ENCODE measurements at regions of chr12 and their contacts with region 1.

Region 1: DNA sequence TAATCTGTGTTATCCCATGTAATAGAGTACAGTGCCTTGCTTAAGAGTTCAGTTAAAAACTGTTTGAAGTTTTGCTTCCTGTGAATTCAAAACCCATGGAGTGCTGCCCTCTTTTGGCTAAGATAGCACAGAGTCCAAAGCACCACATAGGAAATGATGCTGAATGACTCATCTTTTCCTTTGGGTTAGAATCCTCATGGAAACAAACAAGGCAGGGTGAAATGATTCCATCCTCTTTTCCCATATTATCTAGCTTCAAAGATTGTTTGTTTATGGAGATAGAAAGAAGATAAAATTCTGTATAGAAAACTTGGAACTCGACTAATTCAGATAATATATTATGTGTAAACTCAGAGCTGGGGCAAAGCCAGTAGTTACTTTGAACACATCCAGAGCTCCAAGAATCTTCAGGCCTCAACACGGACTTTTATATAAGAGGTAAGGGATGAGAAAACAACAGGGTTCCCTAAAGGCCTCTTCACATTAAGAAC is 87.4 kb downstream of the OTOGL start:
- DNase-seq: peak; percentile 82
- H3K4me3 ChIP-seq: no peak overlapping the region
- H3K27ac ChIP-seq: peak overlapping the region; percentile 70
- H3K4me1 ChIP-seq: peaks cover 10% of the 10 kb centered on the region
- H3K27me3 ChIP-seq: no peaks in the 10 kb centered on the region
- CTCF ChIP-seq: peak; percentile 85 to 87

Region 2: GRCh38 chr12:79420146-79420618 is 766.6 kb before region 1 on chr12:
- CTCF ChIA-PET with region 1: no interaction called
- dilution Hi-C with region 1: no loop called
- in situ Hi-C with region 1: loop called in 1 of 2 experiments (anchors 10 kb)
- intact Hi-C with region 1: loop called (anchors 5 kb)
- DNase-seq: peak; percentile 76
- H3K4me3 ChIP-seq: no peak overlapping the region
- H3K27ac ChIP-seq: peak overlapping the region; percentile 55
- H3K4me1 ChIP-seq: peaks cover 58% of the 10 kb centered on the region
- H3K27me3 ChIP-seq: no peaks in the 10 kb centered on the region
- CTCF ChIP-seq: peak; percentile 51 to 70

Region 3: GRCh38 chr12:79766705-79767464 is 419.9 kb before region 1 on chr12:
- CTCF ChIA-PET with region 1: no interaction called
- dilution Hi-C with region 1: loop called (anchors 25 kb)
- in situ Hi-C with region 1: no loop called
- intact Hi-C with region 1: loop called (anchors 5 kb)
- DNase-seq: no peak
- H3K4me3 ChIP-seq: no peak overlapping the region
- H3K27ac ChIP-seq: no peak overlapping the region
- H3K4me1 ChIP-seq: no peaks in the 10 kb centered on the region
- H3K27me3 ChIP-seq: no peaks in the 10 kb centered on the region
- CTCF ChIP-seq: no peak

Region 4: GRCh38 chr12:79886917-79887519 is 299.8 kb before region 1 on chr12:
- CTCF ChIA-PET with region 1: interaction called, 5 read pairs
- dilution Hi-C with region 1: no loop called
- in situ Hi-C with region 1: loop called in 1 of 2 experiments (anchors 10 kb)
- intact Hi-C with region 1: loop called (anchors 1 kb)
- DNase-seq: peak; percentile 41
- H3K4me3 ChIP-seq: no peak overlapping the region
- H3K27ac ChIP-seq: no peak overlapping the region
- H3K4me1 ChIP-seq: peaks cover 16% of the 10 kb centered on the region
- H3K27me3 ChIP-seq: no peaks in the 10 kb centered on the region
- CTCF ChIP-seq: peak; percentile 63 to 72

Region 5: GRCh38 chr12:80044694-80045046 is 142.1 kb before region 1 on chr12:
- CTCF ChIA-PET with region 1: no interaction called
- dilution Hi-C with region 1: no loop called
- in situ Hi-C with region 1: no loop called
- intact Hi-C with region 1: loop called (anchors 10 kb)
- DNase-seq: peak; percentile 84
- H3K4me3 ChIP-seq: no peak overlapping the region
- H3K27ac ChIP-seq: peak overlapping the region; percentile 41
- H3K4me1 ChIP-seq: peaks cover 17% of the 10 kb centered on the region
- H3K27me3 ChIP-seq: no peaks in the 10 kb centered on the region
- CTCF ChIP-seq: no peak